Vagina (tissue), 2 donors: ENCODE measurements at regions of chrX and their contacts with region 1.

Region 1: DNA sequence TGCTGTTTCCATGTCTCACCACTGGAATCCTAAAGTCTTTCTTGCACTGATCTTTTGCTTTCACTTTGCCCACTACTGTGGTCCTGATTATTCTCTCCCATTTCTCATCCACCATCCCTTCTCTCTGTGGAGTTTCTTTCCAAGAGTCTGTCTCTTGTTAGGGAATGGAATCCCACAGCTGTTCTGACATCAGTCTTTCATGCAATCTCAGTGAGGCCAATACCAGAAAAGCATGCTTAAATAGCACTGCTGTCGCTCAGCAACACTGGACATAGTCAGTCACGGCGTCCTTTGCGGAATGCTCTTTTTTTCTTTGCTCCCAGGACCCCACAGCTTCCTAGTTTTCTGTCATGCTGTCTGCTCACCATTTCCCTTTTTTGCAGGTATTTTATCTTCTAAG is 20.1 kb downstream of the SLITRK4 start:
- DNase-seq: no peak
- H3K4me3 ChIP-seq: no peak overlapping the region
- H3K27ac ChIP-seq: no peak overlapping the region
- H3K4me1 ChIP-seq: no peaks in the 10 kb centered on the region
- H3K27me3 ChIP-seq: no peaks in the 10 kb centered on the region
- CTCF ChIP-seq: no peak
- POLR2A ChIP-seq: no peak

Region 2: DNA sequence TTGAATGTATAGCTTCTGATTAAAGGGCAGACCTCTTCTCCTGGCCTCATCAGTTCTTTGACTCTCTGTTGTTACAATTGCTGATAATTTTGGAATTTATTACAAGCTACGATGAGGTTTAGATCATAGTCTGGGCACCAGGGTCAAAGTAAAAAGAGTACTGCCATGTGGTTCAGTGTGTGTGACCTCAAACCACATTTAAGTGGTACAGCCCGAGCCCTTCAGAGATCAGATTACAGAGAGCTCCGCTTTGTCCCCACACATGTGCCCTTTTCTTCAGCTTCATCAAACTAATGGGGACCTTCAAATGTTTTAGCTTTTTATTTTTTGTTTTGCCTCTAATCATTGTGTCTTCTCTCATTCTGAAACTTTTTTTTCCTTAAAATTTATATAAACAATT is 67.6 kb after region 1 on chrX:
- intact Hi-C with region 1: no loop called
- DNase-seq: no peak
- H3K4me3 ChIP-seq: no peak overlapping the region
- H3K27ac ChIP-seq: no peak overlapping the region
- H3K4me1 ChIP-seq: no peaks in the 10 kb centered on the region
- H3K27me3 ChIP-seq: no peaks in the 10 kb centered on the region
- CTCF ChIP-seq: no peak
- POLR2A ChIP-seq: no peak

Region 3: GRCh38 chrX:145524931-145525330 is 1909.1 kb after region 1 on chrX:
- intact Hi-C with region 1: loop called (anchors 5 kb)
- DNase-seq: no peak
- H3K4me3 ChIP-seq: no peak overlapping the region
- H3K27ac ChIP-seq: no peak overlapping the region
- H3K4me1 ChIP-seq: no peaks in the 10 kb centered on the region
- H3K27me3 ChIP-seq: no peaks in the 10 kb centered on the region
- CTCF ChIP-seq: no peak
- POLR2A ChIP-seq: no peak